Endothelial cell of umbilical vein (primary cell): ENCODE measurements at regions of chrX and their contacts with region 1.

Region 1: GRCh38 chrX:19673375-19674040 is 158.2 kb upstream of the MAP3K15 start:
- DNase-seq: peak; percentile 73
- H3K4me3 ChIP-seq: no peak overlapping the region
- H3K27ac ChIP-seq: peak overlapping the region; percentile 45
- H3K4me1 ChIP-seq: peaks cover 34% of the 10 kb centered on the region
- H3K27me3 ChIP-seq: no peaks in the 10 kb centered on the region
- CTCF ChIP-seq: no peak
- POLR2A ChIP-seq: no peak

Region 2: DNA sequence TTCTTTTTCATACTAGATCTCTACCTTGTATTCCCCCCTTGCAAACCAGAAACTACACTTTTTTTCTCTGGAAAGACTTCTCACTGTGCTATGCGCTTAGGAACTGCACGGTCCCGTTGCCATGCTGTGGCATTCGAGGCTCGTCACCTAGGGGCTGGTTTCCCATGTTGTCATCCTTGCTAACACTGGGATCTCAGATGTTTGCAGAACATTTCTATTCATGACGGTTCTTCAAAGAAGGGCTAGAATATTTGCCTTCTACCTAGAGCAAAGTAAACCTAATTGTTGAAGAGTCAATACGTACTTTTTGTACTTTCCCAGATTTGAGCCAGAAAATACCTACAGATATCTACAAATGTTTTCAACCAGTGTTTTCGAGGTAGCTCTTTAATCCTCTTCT is 1042.6 kb before region 1 on chrX:
- CTCF ChIA-PET with region 1: no interaction called
- POLR2A ChIA-PET with region 1: no interaction called
- dilution Hi-C with region 1: no loop called
- intact Hi-C with region 1: no loop called
- DNase-seq: no peak
- H3K4me3 ChIP-seq: no peak overlapping the region
- H3K27ac ChIP-seq: no peak overlapping the region
- H3K4me1 ChIP-seq: no peaks in the 10 kb centered on the region
- H3K27me3 ChIP-seq: no peaks in the 10 kb centered on the region
- CTCF ChIP-seq: no peak
- POLR2A ChIP-seq: no peak

Region 3: DNA sequence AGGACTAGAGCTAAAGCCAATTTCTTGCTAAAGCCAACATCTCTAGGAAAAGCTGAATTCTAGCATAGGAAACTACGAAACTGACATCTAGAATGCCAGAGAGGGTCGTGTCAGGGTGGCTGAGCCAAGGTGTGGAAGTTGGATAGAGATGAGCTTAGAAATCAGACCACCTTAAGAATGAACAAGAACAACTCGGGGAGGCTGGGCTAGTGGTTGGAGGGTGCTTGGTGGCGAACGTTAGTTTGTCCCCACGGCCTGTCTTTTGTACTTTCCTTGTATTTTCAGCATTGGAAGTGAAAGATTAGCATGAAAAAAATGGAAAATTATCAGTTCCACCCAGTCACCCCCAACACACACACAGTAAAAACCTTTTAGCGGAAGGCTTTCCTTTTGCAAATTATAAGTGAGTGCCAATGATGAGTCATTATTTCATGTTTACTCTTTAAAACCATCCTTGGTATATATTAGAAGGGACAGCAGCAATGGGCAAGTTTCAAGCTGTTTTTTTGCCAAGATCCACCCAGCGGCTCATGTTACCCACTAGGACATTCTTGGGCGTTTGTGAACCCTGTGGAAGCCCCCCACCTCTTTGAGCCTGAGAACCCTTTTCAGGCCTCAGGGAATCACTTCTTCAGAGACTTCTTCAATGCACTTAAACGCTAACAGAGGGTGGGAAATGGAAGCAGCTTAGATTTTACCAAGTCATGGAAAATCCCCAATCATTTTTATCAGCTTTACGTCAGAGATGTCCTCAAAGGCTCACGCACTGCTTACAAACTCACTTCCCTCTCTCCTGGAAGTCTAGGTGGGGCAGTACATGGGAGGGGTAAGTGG is 970.9 kb before region 1 on chrX:
- CTCF ChIA-PET with region 1: no interaction called
- POLR2A ChIA-PET with region 1: no interaction called
- dilution Hi-C with region 1: no loop called
- intact Hi-C with region 1: loop called (anchors 10 kb)
- DNase-seq: peak; percentile 67
- H3K4me3 ChIP-seq: no peak overlapping the region
- H3K27ac ChIP-seq: peak overlapping the region; percentile 24
- H3K4me1 ChIP-seq: peaks cover 14% of the 10 kb centered on the region
- H3K27me3 ChIP-seq: peaks cover 0 to 2% of the 10 kb centered on the region in 2 experiments
- CTCF ChIP-seq: no peak
- POLR2A ChIP-seq: no peak

Region 4: GRCh38 chrX:19709812-19710518 is 36.5 kb after region 1 on chrX:
- CTCF ChIA-PET with region 1: no interaction called
- POLR2A ChIA-PET with region 1: no interaction called
- dilution Hi-C with region 1: no loop called
- intact Hi-C with region 1: loop called (anchors 2 kb)
- DNase-seq: peak; percentile 44
- H3K4me3 ChIP-seq: no peak overlapping the region
- H3K27ac ChIP-seq: peak overlapping the region; percentile 48
- H3K4me1 ChIP-seq: peaks cover 23% of the 10 kb centered on the region
- H3K27me3 ChIP-seq: no peaks in the 10 kb centered on the region
- CTCF ChIP-seq: no peak
- POLR2A ChIP-seq: no peak

Region 5: GRCh38 chrX:19747652-19748610 is 74.4 kb after region 1 on chrX:
- CTCF ChIA-PET with region 1: no interaction called
- POLR2A ChIA-PET with region 1: no interaction called
- dilution Hi-C with region 1: no loop called
- intact Hi-C with region 1: no loop called
- DNase-seq: no peak
- H3K4me3 ChIP-seq: no peak overlapping the region
- H3K27ac ChIP-seq: no peak overlapping the region
- H3K4me1 ChIP-seq: peaks cover 18% of the 10 kb centered on the region
- H3K27me3 ChIP-seq: no peaks in the 10 kb centered on the region
- CTCF ChIP-seq: no peak
- POLR2A ChIP-seq: no peak